Thyroid gland (tissue), 4 donors: ENCODE measurements at regions of chr15 and their contacts with region 1.

Region 1: DNA sequence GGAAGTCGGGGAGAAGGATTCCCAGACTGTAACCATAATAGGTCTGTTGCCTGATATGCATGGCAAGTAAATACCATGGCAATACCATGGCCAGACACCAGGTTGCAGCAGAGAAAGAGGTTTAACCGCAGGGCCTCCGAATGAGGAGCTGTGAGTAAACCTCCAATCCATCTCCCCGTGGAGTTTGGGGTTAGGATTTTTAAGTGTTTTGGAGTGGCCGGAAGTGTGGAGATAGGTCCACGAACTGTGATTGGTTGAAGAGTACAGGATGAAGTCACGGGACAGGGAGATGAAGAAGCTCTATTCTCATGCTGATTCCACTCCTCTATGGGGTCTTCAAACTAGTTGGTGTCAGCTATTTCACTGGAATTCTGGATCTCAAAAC is 127.9 kb downstream of the ST8SIA2 start:
- DNase-seq: peak; percentile 87 to 88
- H3K4me3 ChIP-seq: no peak overlapping the region
- H3K27ac ChIP-seq: no peak overlapping the region
- H3K4me1 ChIP-seq: peaks cover 5 to 38% of the 10 kb centered on the region in 2 donors
- H3K27me3 ChIP-seq: no peaks in the 10 kb centered on the region
- CTCF ChIP-seq: peak; percentile 39 to 97 (median 82)
- POLR2A ChIP-seq: no peak

Region 2: GRCh38 chr15:92268906-92269305 is 252.7 kb before region 1 on chr15:
- intact Hi-C with region 1: no loop called
- DNase-seq: peak in 1 of 2 donors; percentile 6
- H3K4me3 ChIP-seq: no peak overlapping the region
- H3K27ac ChIP-seq: no peak overlapping the region
- H3K4me1 ChIP-seq: no peaks in the 10 kb centered on the region
- H3K27me3 ChIP-seq: no peaks in the 10 kb centered on the region
- CTCF ChIP-seq: no peak
- POLR2A ChIP-seq: no peak

Region 3: GRCh38 chr15:92683232-92683834 is 161.7 kb after region 1 on chr15:
- intact Hi-C with region 1: loop called (anchors 2 kb)
- DNase-seq: peak; percentile 48 to 56
- H3K4me3 ChIP-seq: no peak overlapping the region
- H3K27ac ChIP-seq: peak overlapping the region in 1 of 3 donors; percentile 23
- H3K4me1 ChIP-seq: peaks cover 6 to 9% of the 10 kb centered on the region in 2 donors
- H3K27me3 ChIP-seq: no peaks in the 10 kb centered on the region
- CTCF ChIP-seq: peak in 5 of 6 experiments; percentile 39 to 83 (median 78)
- POLR2A ChIP-seq: no peak